K562 (cell line): ENCODE measurements at regions of chr2 and their contacts with region 1.

Region 1: GRCh38 chr2:16608661-16609643 is 56.7 kb downstream of the CYRIA start:
- DNase-seq: peak; percentile 76 to 86 (median 82)
- ATAC-seq: peak; percentile 96
- H3K4me3 ChIP-seq: peak overlapping the region; percentile 18
- H3K27ac ChIP-seq: no peak overlapping the region
- H3K4me1 ChIP-seq: peaks cover 0 to 4% of the 10 kb centered on the region in 2 experiments; a peak in 2 of 5 replicates
- H3K27me3 ChIP-seq: peaks cover 0 to 11% of the 10 kb centered on the region in 2 experiments; a peak in 1 of 5 replicates
- CTCF ChIP-seq: peak; percentile 91 to 94 (median 94)
- EP300 ChIP-seq: no peak
- POLR2A ChIP-seq: no peak
- RAD21 ChIP-seq: peak; percentile 69 to 80

Region 2: GRCh38 chr2:15939854-15940660 is 668.9 kb before region 1 on chr2 and contains the start of gene MYCN:
- CTCF ChIA-PET with region 1: interaction called, 3 read pairs
- POLR2A ChIA-PET with region 1: no interaction called
- in situ Hi-C with region 1: no loop called
- intact Hi-C with region 1: loop called (anchors 2 kb)
- DNase-seq: peak in 1 of 4 experiments; percentile 12
- ATAC-seq: peak; percentile 60
- H3K4me3 ChIP-seq: no peak within 1 kb of the TSS
- H3K27ac ChIP-seq: no peak within 1 kb of the TSS
- H3K4me1 ChIP-seq: peaks cover 0 to 15% of the 10 kb centered on the region in 2 experiments; a peak in 2 of 5 replicates
- H3K27me3 ChIP-seq: peaks cover 10 to 40% of the 10 kb centered on the region in 2 experiments; a peak in 4 of 5 replicates
- CTCF ChIP-seq: peak; percentile 72 to 79 (median 77); a peak in 5 of 6 replicates
- EP300 ChIP-seq: no peak
- POLR2A ChIP-seq: no peak
- RAD21 ChIP-seq: peak; percentile 77 to 82
- polyA plus RNA-seq, gene MYCN: not detected

Region 3: DNA sequence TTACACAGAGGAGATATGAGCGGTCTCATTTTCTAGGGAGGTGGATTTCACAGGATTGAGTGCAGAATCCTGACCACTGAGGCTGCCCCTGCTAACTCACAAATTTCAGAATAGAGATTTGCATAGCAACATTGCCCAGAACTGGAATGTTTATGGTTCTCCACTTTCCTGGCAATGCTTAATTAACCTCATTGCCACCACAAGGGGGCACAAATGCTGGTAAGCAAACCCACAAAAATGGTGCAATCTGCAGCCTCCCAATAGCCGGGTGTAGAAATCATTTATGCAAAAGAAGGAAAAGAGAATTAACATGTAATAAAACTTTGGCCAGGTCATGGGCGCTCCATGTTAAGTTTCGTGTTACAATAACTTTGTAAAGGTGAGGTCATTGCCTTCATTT is 55.7 kb before region 1 on chr2:
- CTCF ChIA-PET with region 1: interaction called, 14 read pairs
- POLR2A ChIA-PET with region 1: no interaction called
- in situ Hi-C with region 1: no loop called
- intact Hi-C with region 1: loop called (anchors 1 kb)
- DNase-seq: peak; percentile 23 to 48 (median 40)
- ATAC-seq: peak; percentile 68
- H3K4me3 ChIP-seq: no peak overlapping the region
- H3K27ac ChIP-seq: no peak overlapping the region
- H3K4me1 ChIP-seq: no peaks in the 10 kb centered on the region
- H3K27me3 ChIP-seq: no peaks in the 10 kb centered on the region; a peak in 1 of 5 replicates
- CTCF ChIP-seq: peak; percentile 52 to 70 (median 58)
- EP300 ChIP-seq: no peak
- POLR2A ChIP-seq: no peak
- RAD21 ChIP-seq: peak; percentile 44 to 59

Region 4: GRCh38 chr2:16722677-16723076 is 113.7 kb after region 1 on chr2:
- CTCF ChIA-PET with region 1: no interaction called
- POLR2A ChIA-PET with region 1: no interaction called
- in situ Hi-C with region 1: no loop called
- intact Hi-C with region 1: loop called (anchors 1 kb)
- DNase-seq: no peak
- ATAC-seq: peak; percentile 72
- H3K4me3 ChIP-seq: no peak overlapping the region
- H3K27ac ChIP-seq: no peak overlapping the region
- H3K4me1 ChIP-seq: peaks cover 0 to 5% of the 10 kb centered on the region in 2 experiments; a peak in 3 of 5 replicates
- H3K27me3 ChIP-seq: peaks cover 11 to 16% of the 10 kb centered on the region in 2 experiments; a peak in 4 of 5 replicates
- CTCF ChIP-seq: peak; percentile 24 to 53 (median 41); a peak in 4 of 6 replicates
- EP300 ChIP-seq: no peak
- POLR2A ChIP-seq: no peak
- RAD21 ChIP-seq: peak; percentile 66 to 72

Region 5: DNA sequence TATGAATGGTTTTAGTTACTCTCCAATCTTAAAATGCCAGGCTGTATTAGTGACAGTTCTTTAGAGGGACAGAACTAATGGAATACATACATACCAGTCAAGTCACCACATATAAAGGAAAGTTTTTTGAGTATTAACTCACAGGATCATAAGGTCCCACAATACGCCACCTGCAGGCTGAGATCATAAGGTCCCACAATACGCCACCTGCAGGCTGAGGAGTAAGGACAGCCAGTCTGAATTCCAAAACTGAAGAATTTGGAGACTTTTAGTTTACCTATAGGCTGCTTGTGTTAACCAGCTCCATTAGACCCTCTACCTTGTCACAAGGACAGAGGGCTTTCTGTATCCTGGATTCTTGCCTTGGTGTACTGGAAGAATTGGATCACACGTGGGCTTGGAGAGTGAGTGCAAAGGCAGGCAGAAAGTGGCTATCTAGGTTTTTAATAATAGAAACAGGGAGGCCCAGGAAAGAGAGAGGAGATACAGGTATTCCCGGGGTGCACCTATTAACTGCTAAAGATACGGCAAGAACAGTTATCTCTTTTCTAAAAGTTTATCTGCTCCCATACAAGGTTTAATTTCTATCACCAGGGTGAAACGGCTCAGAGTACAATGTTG is 291.6 kb after region 1 on chr2:
- CTCF ChIA-PET with region 1: no interaction called
- POLR2A ChIA-PET with region 1: no interaction called
- in situ Hi-C with region 1: no loop called
- intact Hi-C with region 1: loop called (anchors 5 kb)
- DNase-seq: peak in 3 of 4 experiments; percentile 10 to 62 (median 11)
- ATAC-seq: peak; percentile 95
- H3K4me3 ChIP-seq: no peak overlapping the region
- H3K27ac ChIP-seq: no peak overlapping the region
- H3K4me1 ChIP-seq: no peaks in the 10 kb centered on the region
- H3K27me3 ChIP-seq: no peaks in the 10 kb centered on the region
- CTCF ChIP-seq: peak; percentile 87 to 100 (median 99)
- EP300 ChIP-seq: no peak
- POLR2A ChIP-seq: no peak
- RAD21 ChIP-seq: peak; percentile 45 to 72